ENCODE measurements at regions of chr7 and their contacts with region 1.

Region 1: DNA sequence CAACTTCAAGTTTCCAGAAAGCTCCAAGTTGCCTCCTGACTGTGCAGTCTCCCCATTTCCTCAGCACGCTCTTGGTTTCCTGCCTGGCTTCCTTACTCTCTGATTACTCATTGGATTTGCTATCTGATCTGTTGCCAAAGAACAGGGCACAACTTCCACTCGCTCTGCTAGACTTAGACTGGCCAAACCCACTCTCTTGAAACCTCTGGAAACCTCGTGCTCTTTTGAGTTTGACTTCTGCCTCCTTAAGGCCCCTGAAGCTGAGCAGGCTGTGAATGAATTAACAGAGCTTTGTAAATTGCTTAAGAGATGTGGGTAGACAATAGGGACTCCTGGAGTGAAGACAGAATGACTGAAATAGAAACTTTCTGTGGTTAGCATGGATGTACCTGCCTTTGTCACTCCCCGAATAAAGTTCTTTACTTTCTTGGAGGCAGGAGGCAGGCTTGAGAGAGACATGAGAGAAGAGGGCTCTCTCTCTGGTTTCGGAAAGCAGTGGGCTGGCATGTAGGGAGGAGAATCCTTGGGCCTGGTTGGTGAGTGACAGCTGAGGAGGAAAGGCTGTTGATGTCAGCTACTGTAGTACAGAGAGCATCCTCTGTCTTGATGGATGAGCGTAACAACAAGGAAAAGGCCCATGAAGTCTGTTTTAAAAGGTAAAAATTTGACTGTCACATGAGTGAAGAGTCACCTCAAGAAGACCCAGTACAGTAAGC is 70.8 kb downstream of the CHN2 start:
- DNase-seq: no peak
- H3K4me3 ChIP-seq: no peak overlapping the region
- H3K27ac ChIP-seq: peak overlapping the region; percentile 3
- H3K4me1 ChIP-seq: peaks cover 8% of the 10 kb centered on the region
- H3K27me3 ChIP-seq: no peaks in the 10 kb centered on the region
- CTCF ChIP-seq: no peak
- POLR2A ChIP-seq: no peak

Region 2: DNA sequence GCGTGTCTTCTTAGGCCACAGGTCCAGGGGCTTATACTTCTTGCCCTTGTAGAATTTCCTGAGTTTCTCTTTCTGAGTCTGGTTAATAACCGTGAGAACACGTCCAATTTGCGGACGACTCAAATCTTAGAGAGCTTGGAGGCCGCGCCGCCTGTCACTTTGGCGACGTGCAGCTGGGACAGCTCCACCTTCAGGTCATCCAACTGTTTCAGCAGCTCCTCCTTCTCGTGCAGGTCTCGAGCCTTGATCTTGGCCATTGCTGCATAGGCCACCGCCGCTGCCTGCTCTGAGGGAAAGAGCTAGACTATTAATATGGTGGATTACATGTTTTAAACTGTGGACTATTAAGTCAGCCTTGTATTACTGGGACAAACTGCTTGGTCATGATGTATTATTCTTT is 1995.9 kb before region 1 on chr7:
- intact Hi-C with region 1: no loop called
- DNase-seq: no peak
- H3K4me3 ChIP-seq: no peak overlapping the region
- H3K27ac ChIP-seq: no peak overlapping the region
- H3K4me1 ChIP-seq: no peaks in the 10 kb centered on the region
- H3K27me3 ChIP-seq: no peaks in the 10 kb centered on the region
- CTCF ChIP-seq: no peak
- POLR2A ChIP-seq: no peak

Region 3: DNA sequence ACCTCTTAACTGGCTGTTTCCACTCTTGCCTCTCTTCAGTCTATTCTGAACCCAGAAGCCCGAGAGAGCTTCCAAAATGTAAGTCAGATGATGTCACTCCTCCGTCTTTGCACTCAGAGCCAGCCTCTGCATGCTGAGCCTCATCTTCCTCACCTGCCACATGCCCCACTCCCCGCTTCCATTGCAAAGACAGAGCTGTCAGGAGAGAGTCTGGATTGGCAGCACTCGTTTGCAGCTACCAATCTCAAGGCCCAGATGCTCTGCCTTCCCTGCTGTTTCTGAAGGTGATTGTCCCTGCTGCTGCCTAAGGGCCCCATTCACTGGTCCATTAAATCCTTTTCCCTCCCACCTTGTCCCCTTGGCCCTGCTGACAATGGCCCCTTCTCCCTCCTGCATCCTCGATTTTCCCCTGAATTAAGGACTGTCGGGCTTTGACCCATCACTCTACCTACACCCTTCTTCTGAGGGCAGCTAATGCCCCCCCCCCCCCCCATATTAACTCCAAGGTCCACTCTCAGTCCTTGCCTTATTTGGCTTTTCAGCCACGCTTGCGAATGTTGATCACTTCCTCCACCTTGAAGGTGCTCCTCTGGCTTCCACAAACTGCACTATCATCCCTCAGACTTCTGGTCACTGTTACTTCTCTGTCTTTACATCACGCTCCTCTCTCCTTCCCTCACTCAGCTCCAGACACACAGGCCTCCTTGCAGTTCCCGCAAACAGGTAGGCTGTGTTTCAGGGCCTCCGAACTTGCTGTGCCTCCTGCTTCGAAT is 27.7 kb after region 1 on chr7:
- intact Hi-C with region 1: loop called (anchors 1 kb)
- DNase-seq: no peak
- H3K4me3 ChIP-seq: no peak overlapping the region
- H3K27ac ChIP-seq: no peak overlapping the region
- H3K4me1 ChIP-seq: no peaks in the 10 kb centered on the region
- H3K27me3 ChIP-seq: no peaks in the 10 kb centered on the region
- CTCF ChIP-seq: no peak
- POLR2A ChIP-seq: no peak

Region 4: DNA sequence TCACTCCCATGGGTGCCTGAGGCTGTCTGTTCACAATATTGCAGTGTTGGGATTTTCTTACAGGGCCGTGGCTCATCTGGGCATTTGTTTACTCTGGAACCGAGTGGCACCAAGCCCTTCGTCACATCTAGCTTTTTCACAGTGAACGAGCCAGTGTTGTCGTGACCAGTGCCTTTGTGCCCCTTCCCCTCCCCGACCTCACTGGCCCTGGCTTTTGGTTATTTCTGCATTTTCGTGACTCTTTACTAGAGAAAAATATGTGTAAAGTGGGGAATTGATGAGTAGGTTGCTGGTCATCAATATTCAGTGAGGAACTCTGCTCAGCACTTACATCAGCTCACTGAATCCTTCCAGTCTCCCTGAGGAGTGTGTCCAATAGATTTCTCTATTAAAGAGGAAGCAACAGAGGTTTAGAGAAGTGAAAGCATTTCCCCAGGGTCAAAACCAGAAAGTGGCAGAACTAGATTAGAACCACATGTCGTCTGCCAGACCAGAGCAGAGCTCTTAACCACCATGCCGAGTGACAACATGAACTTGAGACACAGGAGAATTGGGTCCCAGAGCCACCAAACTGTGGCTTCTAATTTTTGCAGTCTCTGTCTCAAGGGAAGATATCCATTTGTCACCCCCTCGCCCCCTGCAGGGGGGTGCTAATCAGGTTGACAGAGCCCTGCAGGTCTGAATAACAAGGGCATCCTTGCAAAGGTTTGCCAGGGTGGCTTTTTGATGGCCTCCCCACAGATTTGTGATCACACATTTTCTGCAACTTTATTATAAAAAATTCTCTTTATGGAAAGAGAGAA is 54.6 kb after region 1 on chr7:
- intact Hi-C with region 1: no loop called
- DNase-seq: no peak
- H3K4me3 ChIP-seq: no peak overlapping the region
- H3K27ac ChIP-seq: no peak overlapping the region
- H3K4me1 ChIP-seq: no peaks in the 10 kb centered on the region
- H3K27me3 ChIP-seq: no peaks in the 10 kb centered on the region
- CTCF ChIP-seq: no peak
- POLR2A ChIP-seq: no peak

Measured in vagina (tissue), 2 donors.